Endothelial cell of umbilical vein (primary cell): ENCODE measurements at regions of chr12 and their contacts with region 1.

Region 1: GRCh38 chr12:122336015-122336946 is 70.0 kb upstream of the VPS33A start:
- DNase-seq: peak; percentile 40
- H3K4me3 ChIP-seq: no peak overlapping the region
- H3K27ac ChIP-seq: no peak overlapping the region
- H3K4me1 ChIP-seq: no peaks in the 10 kb centered on the region
- H3K27me3 ChIP-seq: no peaks in the 10 kb centered on the region
- CTCF ChIP-seq: peak; percentile 55 to 71
- POLR2A ChIP-seq: no peak

Region 2: DNA sequence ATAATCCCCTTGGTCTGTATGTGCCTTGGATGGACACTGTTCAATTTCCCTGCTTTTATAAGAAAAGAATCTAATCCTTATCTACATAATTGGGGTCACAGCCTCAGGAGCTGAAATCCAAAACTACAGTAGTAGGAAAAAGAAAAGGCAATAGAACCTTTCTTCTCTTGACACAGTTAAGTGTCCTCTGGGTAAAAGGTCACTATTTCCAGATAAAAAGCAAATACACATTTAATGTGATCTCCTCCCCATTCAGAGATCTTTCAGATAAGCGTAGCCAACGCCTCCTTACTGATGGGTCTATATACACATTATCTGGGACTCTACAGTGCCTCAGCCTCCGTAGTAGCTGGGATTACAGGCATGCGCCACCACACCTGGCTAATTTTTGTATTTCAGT is 12.8 kb after region 1 on chr12:
- CTCF ChIA-PET with region 1: interaction called, 13 read pairs
- POLR2A ChIA-PET with region 1: no interaction called
- dilution Hi-C with region 1: no loop called
- intact Hi-C with region 1: no loop called
- DNase-seq: no peak
- H3K4me3 ChIP-seq: no peak overlapping the region
- H3K27ac ChIP-seq: no peak overlapping the region
- H3K4me1 ChIP-seq: peaks cover 9% of the 10 kb centered on the region
- H3K27me3 ChIP-seq: no peaks in the 10 kb centered on the region
- CTCF ChIP-seq: no peak
- POLR2A ChIP-seq: no peak

Region 3: DNA sequence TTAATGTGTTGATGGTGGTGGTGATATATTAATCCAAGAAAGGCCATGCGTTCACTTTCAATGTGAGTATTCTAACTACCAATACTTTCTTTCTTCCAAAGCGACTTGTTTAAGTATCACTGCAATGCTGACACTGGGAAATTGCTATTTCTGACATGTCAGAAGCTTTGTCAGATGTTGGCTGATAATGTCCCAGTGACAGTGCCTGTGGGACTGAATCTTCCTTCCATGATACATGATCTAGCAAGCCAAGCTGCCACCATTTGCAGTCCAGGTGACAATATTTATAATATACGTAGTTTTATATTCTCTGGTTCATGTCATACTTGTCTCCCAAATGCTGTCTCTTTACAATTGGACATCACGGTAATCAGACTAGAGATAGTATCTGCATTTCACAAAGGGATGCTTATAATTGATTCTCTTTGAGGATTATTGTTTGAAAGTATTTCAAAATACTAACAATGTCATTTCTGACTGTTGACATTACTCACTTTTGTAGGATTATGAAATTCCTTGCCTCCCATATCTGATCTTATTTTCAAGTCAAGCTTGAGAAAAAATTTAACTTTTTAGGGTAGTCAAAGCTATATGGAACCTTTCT is 248.0 kb after region 1 on chr12:
- CTCF ChIA-PET with region 1: no interaction called
- POLR2A ChIA-PET with region 1: no interaction called
- dilution Hi-C with region 1: no loop called
- intact Hi-C with region 1: no loop called
- DNase-seq: no peak
- H3K4me3 ChIP-seq: no peak overlapping the region
- H3K27ac ChIP-seq: no peak overlapping the region
- H3K4me1 ChIP-seq: no peaks in the 10 kb centered on the region
- H3K27me3 ChIP-seq: no peaks in the 10 kb centered on the region
- CTCF ChIP-seq: no peak
- POLR2A ChIP-seq: no peak